ENCODE measurements at regions of chr15 and their contacts with region 1.

Region 1: DNA sequence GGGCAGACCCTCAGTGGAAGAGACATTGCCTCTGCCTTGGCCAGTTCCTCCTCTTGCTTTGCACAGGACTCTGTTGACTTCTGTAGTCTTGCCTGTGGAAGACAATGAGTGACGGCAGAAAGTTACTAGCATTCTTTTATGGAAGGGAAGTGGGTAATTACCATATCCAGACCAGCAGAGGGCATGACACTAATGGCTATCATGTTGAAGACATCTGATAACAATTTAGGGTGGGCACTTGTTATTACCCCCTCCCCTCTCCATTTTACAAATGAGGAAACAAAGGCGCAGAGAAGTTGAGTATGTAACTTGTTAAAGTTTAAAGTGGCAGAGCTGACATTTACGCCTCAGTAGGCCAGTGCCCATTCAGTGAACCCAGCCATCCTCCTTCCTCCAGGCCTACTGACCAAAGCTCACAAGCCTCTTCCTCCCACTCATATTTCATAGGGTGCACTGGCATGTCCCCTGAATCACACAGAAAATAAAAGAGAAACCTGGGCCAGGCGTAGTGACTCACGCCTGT is 48.2 kb upstream of the FMN1 start:
- DNase-seq: peak; percentile 60
- H3K4me3 Mint-ChIP-seq: no peak overlapping the region
- H3K27ac Mint-ChIP-seq: peak overlapping the region; percentile 64
- H3K4me1 Mint-ChIP-seq: peaks cover 16% of the 10 kb centered on the region
- H3K27me3 Mint-ChIP-seq: no peaks in the 10 kb centered on the region
- CTCF ChIP-seq: peak; percentile 36

Region 2: GRCh38 chr15:33114374-33114717 is 128.4 kb before region 1 on chr15:
- CTCF ChIA-PET with region 1: no interaction called
- POLR2A ChIA-PET with region 1: no interaction called
- intact Hi-C with region 1: no loop called
- DNase-seq: no peak
- H3K4me3 Mint-ChIP-seq: no peak overlapping the region
- H3K27ac Mint-ChIP-seq: no peak overlapping the region
- H3K4me1 Mint-ChIP-seq: no peaks in the 10 kb centered on the region
- H3K27me3 Mint-ChIP-seq: peaks cover 11% of the 10 kb centered on the region
- CTCF ChIP-seq: no peak

Region 3: DNA sequence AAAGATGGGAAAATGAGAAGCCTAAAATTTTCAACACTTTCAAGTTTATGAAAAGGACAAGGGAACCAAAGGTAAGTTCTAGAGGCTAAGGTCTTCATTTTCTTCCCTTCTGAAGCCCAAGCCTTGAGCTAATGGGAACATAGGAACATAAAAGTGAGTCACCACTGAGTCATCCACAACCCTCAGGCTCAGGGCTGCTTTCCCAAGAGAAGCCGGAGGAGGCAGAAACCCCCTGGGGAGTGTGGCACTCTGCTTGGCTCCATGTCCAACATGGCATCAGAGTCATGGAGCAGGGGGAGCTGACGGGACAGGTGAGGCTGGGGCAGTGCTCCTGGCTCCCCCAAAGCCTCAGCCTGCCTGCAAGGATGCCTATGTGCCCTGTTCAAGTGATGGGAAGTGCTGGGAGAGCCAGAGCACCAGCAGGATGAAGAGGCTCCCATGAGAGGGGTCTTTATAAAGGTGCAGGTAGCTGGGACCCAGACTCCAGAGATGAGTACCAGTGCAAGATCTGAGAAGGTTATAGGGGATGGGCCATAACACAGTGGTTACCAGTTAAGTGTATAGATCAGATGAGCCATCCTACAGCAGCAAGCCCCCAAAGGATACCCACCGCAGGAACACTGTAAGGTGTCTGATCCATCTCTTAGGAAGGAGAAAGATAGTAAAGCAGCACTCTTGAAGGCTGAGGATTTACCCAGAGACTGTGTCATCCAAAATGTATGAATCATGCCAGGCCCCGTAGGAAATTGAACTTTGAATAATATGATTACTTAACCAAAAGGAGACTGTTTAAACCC is 36.3 kb after region 1 on chr15:
- CTCF ChIA-PET with region 1: interaction called, 4 read pairs
- POLR2A ChIA-PET with region 1: interaction called, 3 read pairs
- intact Hi-C with region 1: loop called (anchors 2 kb)
- DNase-seq: peak; percentile 97
- H3K4me3 Mint-ChIP-seq: peak overlapping the region; percentile 15
- H3K27ac Mint-ChIP-seq: peak overlapping the region; percentile 77
- H3K4me1 Mint-ChIP-seq: peaks cover 18% of the 10 kb centered on the region
- H3K27me3 Mint-ChIP-seq: no peaks in the 10 kb centered on the region
- CTCF ChIP-seq: peak; percentile 10

Measured in MCF 10A (cell line).